Mammary epithelial cell (primary cell): ENCODE measurements at regions of chr4 and their contacts with region 1.

Region 1: GRCh38 chr4:83455281-83456129 is at the starts of genes HELQ and MRPS18C:
- DNase-seq: peak; percentile 98
- H3K4me3 ChIP-seq: peak within 1 kb of the TSS; percentile 74 to 78 (median 76)
- H3K27ac ChIP-seq: peak within 1 kb of the TSS; percentile 95
- H3K4me1 ChIP-seq: no peaks in the 10 kb centered on the region
- H3K27me3 ChIP-seq: no peaks in the 10 kb centered on the region
- CTCF ChIP-seq: peak in 1 of 2 donors; percentile 53
- total RNA-seq, gene HELQ: 13.4 to 16.0 TPM
- total RNA-seq, gene MRPS18C: 10.8 to 59.5 TPM

Region 2: GRCh38 chr4:81747242-81747930 is 1708.1 kb before region 1 on chr4:
- CTCF ChIA-PET with region 1: no interaction called
- dilution Hi-C with region 1: no loop called
- in situ Hi-C with region 1: no loop called
- intact Hi-C with region 1: no loop called
- DNase-seq: no peak
- H3K4me3 ChIP-seq: no peak overlapping the region
- H3K27ac ChIP-seq: no peak overlapping the region
- H3K4me1 ChIP-seq: no peaks in the 10 kb centered on the region
- H3K27me3 ChIP-seq: no peaks in the 10 kb centered on the region
- CTCF ChIP-seq: no peak

Region 3: DNA sequence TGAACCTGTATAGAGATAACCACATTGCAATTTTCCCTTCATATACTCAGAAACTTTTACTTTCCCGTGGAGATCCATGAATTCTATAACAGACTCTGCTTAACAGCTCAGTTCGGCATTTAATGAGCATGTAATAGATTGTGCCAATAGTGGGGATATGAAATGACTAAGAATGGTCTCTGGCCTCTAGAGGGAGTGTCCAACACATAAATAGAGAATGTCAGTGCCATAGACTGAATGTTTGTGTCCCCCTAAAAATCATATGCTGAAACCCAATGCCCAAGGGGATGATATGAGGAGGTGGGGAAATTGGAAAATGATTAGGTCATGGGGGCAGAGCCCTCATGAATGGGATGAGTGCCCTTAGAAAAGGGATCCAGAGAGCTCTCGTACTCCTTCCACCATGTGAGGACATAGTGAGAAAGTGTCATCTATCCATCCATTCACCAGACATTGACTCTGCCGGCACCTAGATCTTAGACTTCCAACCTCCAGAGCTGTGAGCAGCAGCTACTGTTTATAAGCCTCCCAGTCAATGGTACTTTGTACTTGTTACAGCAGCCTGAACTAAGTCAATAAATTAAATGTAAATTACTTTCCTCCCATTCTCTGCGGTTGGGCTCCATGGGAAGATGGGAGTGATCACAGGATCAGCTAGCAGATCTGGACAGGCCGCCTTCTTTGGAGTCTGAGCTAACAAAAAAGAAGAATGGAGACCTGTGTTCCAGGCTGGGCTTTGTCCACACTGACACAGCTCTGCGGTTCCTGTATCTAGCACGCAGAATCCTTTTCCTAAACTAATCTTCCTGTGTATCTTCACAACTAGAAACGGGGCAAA is 92.8 kb before region 1 on chr4:
- CTCF ChIA-PET with region 1: interaction called, 3 read pairs
- dilution Hi-C with region 1: no loop called
- in situ Hi-C with region 1: no loop called
- intact Hi-C with region 1: loop called (anchors 1 kb)
- DNase-seq: peak; percentile 32
- H3K4me3 ChIP-seq: no peak overlapping the region
- H3K27ac ChIP-seq: no peak overlapping the region
- H3K4me1 ChIP-seq: peaks cover 19% of the 10 kb centered on the region
- H3K27me3 ChIP-seq: no peaks in the 10 kb centered on the region
- CTCF ChIP-seq: peak; percentile 41 to 42

Region 4: GRCh38 chr4:83387753-83388676 is 67.5 kb before region 1 on chr4:
- CTCF ChIA-PET with region 1: no interaction called
- dilution Hi-C with region 1: loop called (anchors 5 kb)
- in situ Hi-C with region 1: no loop called
- intact Hi-C with region 1: no loop called
- DNase-seq: no peak
- H3K4me3 ChIP-seq: no peak overlapping the region
- H3K27ac ChIP-seq: no peak overlapping the region
- H3K4me1 ChIP-seq: peaks cover 10% of the 10 kb centered on the region
- H3K27me3 ChIP-seq: no peaks in the 10 kb centered on the region
- CTCF ChIP-seq: peak in 1 of 2 donors; percentile 3

Region 5: GRCh38 chr4:83484500-83485461 is 29.3 kb after region 1 on chr4 and contains the start of gene ABRAXAS1:
- CTCF ChIA-PET with region 1: no interaction called
- dilution Hi-C with region 1: no loop called
- in situ Hi-C with region 1: no loop called
- intact Hi-C with region 1: loop called (anchors 1 kb)
- DNase-seq: peak; percentile 94
- H3K4me3 ChIP-seq: peak within 1 kb of the TSS; percentile 50 to 88 (median 68)
- H3K27ac ChIP-seq: peak within 1 kb of the TSS; percentile 33
- H3K4me1 ChIP-seq: peaks cover 11% of the 10 kb centered on the region
- H3K27me3 ChIP-seq: no peaks in the 10 kb centered on the region
- CTCF ChIP-seq: no peak
- total RNA-seq, gene ABRAXAS1: 5.2 to 6.7 TPM

Region 6: DNA sequence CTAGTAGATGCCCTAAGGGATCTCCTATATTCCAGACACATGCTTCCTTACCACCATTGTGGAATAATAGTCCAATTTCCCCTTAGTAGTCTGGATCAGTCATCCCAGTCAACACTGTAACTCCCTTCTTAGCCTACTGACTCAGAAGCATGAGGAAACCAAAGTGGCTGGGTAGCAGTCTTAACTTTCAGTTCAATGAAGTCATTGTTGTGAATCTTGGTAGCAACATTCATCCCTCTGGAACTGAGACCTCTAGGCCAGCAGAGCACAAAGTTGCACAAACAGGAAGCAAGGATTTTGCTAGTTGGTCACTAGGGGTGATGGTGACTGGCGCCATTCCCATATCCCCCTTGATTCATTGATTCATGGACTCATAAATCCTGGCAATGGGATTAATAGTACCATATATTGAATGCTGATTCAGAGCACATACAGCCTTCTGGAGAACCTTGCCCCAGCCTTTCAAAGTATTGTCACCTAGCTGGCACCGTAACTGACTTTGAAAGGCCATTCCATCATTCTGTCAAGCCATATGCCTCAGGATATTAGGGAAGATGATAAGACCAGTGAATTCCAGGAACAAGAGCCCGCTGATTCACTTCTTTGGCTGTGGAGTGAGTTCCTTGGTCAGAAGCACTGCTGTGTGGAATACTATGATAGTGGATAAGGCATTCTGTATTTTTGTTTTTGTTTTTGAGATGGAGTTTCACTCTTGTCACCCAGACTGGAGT is 60.7 kb after region 1 on chr4:
- CTCF ChIA-PET with region 1: no interaction called
- dilution Hi-C with region 1: no loop called
- in situ Hi-C with region 1: no loop called
- intact Hi-C with region 1: no loop called
- DNase-seq: peak; percentile 93
- H3K4me3 ChIP-seq: no peak overlapping the region
- H3K27ac ChIP-seq: no peak overlapping the region
- H3K4me1 ChIP-seq: peaks cover 4% of the 10 kb centered on the region
- H3K27me3 ChIP-seq: no peaks in the 10 kb centered on the region
- CTCF ChIP-seq: no peak

Region 7: DNA sequence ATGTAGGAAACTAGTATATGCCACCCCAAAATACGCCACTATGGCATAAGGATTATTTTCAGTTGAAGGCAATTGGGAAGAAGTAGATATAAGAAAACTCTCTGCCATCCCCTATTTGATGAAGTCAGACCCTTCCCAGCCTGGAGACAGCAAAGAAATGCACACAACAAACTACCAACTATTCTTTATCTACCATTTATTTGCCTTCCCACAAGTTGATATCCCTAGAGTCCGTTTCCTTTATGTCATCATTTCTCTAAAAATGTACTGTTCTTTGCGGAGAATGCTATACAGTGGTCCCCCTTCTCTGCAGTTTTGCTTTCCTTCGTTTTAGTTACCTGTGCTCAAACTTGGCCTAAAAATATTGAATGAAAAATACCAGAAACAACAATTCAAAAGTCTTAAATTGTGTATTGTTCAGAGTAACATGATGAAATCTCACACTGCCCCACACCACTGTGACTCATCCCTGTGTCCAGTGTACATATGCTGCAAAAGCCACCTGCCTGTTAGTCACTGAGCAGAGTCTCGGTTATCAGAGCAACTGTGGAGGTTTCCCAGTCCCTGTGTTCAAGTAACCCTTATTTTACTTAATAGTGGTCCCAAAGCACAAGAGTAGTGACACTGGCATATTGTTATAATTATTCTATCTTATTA is 1358.7 kb after region 1 on chr4:
- CTCF ChIA-PET with region 1: interaction called, 11 read pairs
- dilution Hi-C with region 1: no loop called
- in situ Hi-C with region 1: no loop called
- intact Hi-C with region 1: no loop called
- DNase-seq: peak; percentile 91
- H3K4me3 ChIP-seq: no peak overlapping the region
- H3K27ac ChIP-seq: peak overlapping the region; percentile 58
- H3K4me1 ChIP-seq: peaks cover 14% of the 10 kb centered on the region
- H3K27me3 ChIP-seq: no peaks in the 10 kb centered on the region
- CTCF ChIP-seq: no peak